OCI-LY7 (cell line): ENCODE measurements at regions of chr17 and their contacts with region 1.

Region 1: GRCh38 chr17:44775136-44775837 is 16.5 kb downstream of the ADAM11 start:
- DNase-seq: peak; percentile 99
- H3K4me3 ChIP-seq: peak overlapping the region; percentile 72
- H3K27ac ChIP-seq: peak overlapping the region; percentile 8
- H3K4me1 ChIP-seq: peaks cover 19% of the 10 kb centered on the region
- CTCF ChIP-seq: peak; percentile 54; the same call in 1 of the 2 replicates

Region 2: DNA sequence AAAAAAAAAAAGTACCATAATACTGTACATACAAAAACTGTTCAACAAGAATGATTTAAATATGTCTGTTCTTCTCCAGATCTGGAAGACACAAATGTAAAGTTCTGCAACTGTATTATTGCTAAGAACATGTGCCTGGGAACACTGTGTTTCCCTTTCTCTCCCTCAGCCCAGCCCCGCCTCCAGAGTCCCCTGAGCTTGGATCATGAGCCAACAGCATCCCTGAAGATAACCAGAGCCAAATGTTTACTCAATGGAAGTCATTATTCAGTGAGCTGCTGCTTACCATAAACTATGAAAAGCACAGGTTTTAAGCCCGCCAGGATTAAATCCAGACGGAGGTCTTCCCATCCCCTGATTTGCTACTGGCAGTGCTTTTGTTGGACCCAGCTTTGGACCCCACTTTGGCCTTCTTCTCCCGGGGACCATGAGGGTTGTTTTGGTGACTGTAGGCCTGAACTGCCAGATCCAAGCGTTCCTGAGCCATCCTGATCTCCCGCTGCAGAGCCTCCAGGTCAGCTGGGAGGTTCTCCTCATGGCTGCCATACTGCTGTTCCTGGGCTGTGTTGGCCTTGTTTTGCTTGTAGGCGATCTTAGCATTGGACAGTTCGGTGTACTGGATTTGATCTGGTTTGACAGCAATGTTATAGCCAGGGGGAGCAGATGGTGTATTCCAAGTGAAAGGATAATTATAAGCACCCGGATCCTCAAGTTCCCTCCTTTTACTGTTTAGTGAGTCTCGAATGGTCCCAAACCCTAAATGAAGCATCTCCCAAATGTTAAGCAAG is 29.2 kb after region 1 on chr17:
- CTCF ChIA-PET with region 1: no interaction called
- POLR2A ChIA-PET with region 1: no interaction called
- intact Hi-C with region 1: loop called (anchors 1 kb)
- DNase-seq: no peak
- H3K4me3 ChIP-seq: no peak overlapping the region
- H3K27ac ChIP-seq: no peak overlapping the region
- H3K4me1 ChIP-seq: no peaks in the 10 kb centered on the region
- CTCF ChIP-seq: no peak

Region 3: DNA sequence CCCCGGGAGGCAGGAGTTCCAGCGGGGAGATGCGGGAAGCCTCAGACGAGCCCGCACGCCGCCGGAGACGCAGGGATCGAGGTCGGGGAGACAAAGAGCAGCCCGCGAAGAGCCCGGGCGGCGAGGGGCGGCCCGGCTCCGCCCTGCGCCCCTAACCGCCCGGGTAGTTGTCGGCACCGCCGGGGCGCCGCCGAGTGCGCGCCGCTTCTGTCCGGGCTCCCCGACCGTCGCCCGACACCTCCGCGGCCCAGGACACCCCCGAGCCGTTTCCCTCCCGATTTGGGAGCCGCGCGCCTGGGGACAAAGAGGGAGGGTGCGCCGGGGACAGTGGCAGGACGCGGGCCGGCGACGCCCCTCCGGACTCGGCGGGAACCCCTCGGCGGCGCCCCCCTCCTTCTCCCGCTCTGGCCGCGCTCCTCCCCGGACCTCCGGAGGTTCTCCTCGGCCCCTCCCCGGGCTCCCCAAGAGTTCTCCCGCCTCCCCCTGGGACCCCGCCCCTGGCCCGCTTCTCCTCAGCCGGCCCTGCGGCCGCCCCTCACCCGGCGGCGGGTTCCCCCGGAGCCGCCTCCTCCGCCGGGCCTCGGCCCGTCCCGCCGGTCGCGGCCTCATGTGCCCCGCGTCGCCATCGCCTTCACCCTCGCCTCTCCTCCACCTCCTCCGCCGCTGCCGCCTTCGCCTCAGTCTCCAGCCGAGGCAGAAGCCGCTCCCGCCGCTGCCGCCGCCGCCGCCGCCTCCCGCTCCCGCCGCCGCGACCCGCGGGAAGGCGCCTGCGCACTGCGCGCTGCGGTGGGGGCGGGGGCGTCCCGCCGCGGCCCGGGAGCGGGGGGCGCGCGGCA is 54.5 kb after region 1 on chr17 and contains the start of gene GJC1:
- CTCF ChIA-PET with region 1: no interaction called
- POLR2A ChIA-PET with region 1: no interaction called
- intact Hi-C with region 1: loop called (anchors 2 kb)
- DNase-seq: peak; percentile 62
- H3K4me3 ChIP-seq: peak within 1 kb of the TSS; percentile 84
- H3K27ac ChIP-seq: peak within 1 kb of the TSS; percentile 36
- H3K4me1 ChIP-seq: peaks cover 25% of the 10 kb centered on the region
- CTCF ChIP-seq: no peak
- total RNA-seq, gene GJC1: 14.2 and 21.1 TPM in 2 replicates

Region 4: DNA sequence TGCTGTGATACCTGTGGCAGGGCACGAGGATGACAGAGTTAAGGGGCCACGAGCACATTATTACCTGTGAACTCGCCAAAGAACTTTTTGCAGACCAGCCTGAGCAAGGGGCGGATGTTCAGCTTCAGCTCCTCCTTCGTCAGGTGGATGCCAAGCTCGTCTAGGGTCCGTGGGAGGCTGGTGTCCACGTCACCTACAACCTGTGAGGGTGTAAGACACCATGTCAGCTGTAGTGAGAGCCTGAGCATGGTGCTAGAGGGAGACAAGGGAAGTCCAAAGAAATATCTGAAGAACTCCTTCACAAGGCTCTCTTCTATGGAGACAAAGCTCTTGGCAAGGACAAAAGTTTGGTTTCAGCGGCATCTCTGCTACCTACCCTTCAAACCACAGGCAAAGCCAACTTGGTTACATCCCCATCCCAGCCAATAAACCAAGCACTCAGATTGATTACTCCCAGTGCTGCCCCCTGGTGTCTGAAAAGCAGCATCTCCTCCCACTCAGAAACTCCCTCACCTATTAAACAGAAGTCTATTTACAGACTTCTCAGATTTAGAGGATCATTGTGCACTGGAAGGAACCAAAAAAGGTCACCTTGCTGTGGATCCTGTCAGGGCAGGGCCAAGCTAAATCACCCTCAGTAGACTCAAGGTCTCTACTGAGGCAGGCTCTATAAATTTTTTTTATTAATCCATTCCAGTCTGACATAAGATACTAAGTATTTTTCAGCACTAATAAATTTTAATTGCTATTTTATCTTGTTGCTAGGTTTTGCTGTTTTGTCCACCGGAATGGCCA is 89.8 kb after region 1 on chr17:
- CTCF ChIA-PET with region 1: interaction called, 5 read pairs
- POLR2A ChIA-PET with region 1: no interaction called
- intact Hi-C with region 1: loop called (anchors 1 kb)
- DNase-seq: peak; percentile 77
- H3K4me3 ChIP-seq: no peak overlapping the region
- H3K27ac ChIP-seq: no peak overlapping the region
- H3K4me1 ChIP-seq: no peaks in the 10 kb centered on the region
- CTCF ChIP-seq: peak; percentile 96